ENCODE measurements at regions of chr6 and their contacts with region 1.

Region 1: DNA sequence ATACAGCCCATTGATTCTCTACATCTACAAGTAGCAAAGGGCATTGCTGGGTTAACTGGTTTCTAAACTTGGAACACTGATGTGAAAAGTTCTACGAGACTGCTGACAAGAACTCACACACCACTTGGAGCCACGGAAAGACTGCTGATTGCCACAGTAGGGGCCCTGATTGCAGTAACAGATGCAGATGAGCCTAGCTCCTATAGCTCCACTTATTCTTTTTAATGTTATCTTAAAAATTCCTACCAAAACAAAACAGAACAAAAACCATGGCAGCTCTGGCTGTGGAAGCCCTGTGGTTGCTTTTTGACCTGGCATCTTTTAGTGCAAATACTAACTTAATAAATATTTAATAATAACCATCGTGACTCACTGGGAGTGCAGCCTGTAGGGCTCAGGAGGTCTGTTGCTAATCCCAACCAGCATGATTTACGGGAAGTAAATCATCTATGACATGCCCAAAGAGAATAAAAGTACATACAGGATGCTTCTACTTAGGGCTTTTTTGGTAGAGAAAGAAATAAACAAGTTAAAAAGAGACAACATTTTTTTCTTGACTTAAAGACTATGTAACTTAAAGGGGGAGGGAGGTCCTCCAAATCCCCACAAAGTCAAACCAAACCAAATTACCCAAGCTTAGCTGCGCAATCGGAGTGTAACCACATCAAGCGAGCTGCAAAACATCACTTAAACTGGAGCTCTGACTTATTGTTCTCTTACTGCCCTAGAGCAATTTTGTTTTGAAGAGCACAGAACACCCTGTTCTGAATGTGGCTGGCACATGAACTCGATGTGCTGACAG is 87.2 kb downstream of the FKBP5 start:
- DNase-seq: peak; percentile 92
- H3K4me3 Mint-ChIP-seq: peak overlapping the region; percentile 58
- H3K27ac Mint-ChIP-seq: peak overlapping the region; percentile 96
- H3K4me1 Mint-ChIP-seq: peaks cover 63% of the 10 kb centered on the region
- H3K27me3 Mint-ChIP-seq: no peaks in the 10 kb centered on the region
- CTCF ChIP-seq: no peak

Region 2: GRCh38 chr6:35583893-35584688 is 17.4 kb before region 1 on chr6:
- CTCF ChIA-PET with region 1: interaction called, 7 read pairs
- POLR2A ChIA-PET with region 1: interaction called, 169 read pairs
- intact Hi-C with region 1: loop called (anchors 2 kb)
- DNase-seq: peak; percentile 82
- H3K4me3 Mint-ChIP-seq: no peak overlapping the region
- H3K27ac Mint-ChIP-seq: peak overlapping the region; percentile 75
- H3K4me1 Mint-ChIP-seq: peaks cover 40% of the 10 kb centered on the region
- H3K27me3 Mint-ChIP-seq: no peaks in the 10 kb centered on the region
- CTCF ChIP-seq: peak; percentile 65

Region 3: DNA sequence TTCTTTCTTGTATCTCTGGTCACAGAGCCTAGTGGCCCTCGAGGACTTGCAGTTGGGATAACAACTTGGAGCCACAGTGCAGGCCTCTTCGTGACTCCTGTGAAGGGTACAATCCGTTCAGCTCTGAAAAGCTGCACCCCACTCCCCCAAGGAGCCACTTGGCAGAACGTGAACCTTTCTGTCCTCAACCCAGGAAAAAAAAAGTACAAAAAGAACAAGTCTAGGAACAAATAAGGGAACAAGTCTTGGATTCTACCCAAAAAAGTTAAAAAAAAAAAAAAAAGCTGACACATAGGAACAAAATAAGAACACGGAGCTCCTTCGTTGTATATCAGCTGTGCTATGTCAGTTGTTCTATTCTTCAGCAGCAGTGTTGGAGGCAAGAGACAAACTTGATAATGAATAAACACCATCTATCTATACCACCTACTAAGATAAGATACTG is 10.9 kb before region 1 on chr6:
- CTCF ChIA-PET with region 1: interaction called, 7 read pairs
- POLR2A ChIA-PET with region 1: interaction called, 169 read pairs
- intact Hi-C with region 1: loop called (anchors 2 kb)
- DNase-seq: no peak
- H3K4me3 Mint-ChIP-seq: peak overlapping the region; percentile 47
- H3K27ac Mint-ChIP-seq: peak overlapping the region; percentile 79
- H3K4me1 Mint-ChIP-seq: peaks cover 40% of the 10 kb centered on the region
- H3K27me3 Mint-ChIP-seq: no peaks in the 10 kb centered on the region
- CTCF ChIP-seq: no peak

Region 4: GRCh38 chr6:35624341-35625070 is 23.0 kb after region 1 on chr6:
- CTCF ChIA-PET with region 1: no interaction called
- POLR2A ChIA-PET with region 1: interaction called, 36 read pairs
- intact Hi-C with region 1: no loop called
- DNase-seq: no peak
- H3K4me3 Mint-ChIP-seq: no peak overlapping the region
- H3K27ac Mint-ChIP-seq: peak overlapping the region; percentile 61
- H3K4me1 Mint-ChIP-seq: peaks cover 13% of the 10 kb centered on the region
- H3K27me3 Mint-ChIP-seq: no peaks in the 10 kb centered on the region
- CTCF ChIP-seq: no peak

Region 5: GRCh38 chr6:35663447-35664235 is 62.1 kb after region 1 on chr6:
- CTCF ChIA-PET with region 1: no interaction called
- POLR2A ChIA-PET with region 1: interaction called, 13 read pairs
- intact Hi-C with region 1: no loop called
- DNase-seq: peak; percentile 29
- H3K4me3 Mint-ChIP-seq: no peak overlapping the region
- H3K27ac Mint-ChIP-seq: no peak overlapping the region
- H3K4me1 Mint-ChIP-seq: peaks cover 10% of the 10 kb centered on the region
- H3K27me3 Mint-ChIP-seq: no peaks in the 10 kb centered on the region
- CTCF ChIP-seq: no peak

Measured in MCF 10A (cell line).